ENCODE measurements at regions of chr16 and their contacts with region 1.

Region 1: DNA sequence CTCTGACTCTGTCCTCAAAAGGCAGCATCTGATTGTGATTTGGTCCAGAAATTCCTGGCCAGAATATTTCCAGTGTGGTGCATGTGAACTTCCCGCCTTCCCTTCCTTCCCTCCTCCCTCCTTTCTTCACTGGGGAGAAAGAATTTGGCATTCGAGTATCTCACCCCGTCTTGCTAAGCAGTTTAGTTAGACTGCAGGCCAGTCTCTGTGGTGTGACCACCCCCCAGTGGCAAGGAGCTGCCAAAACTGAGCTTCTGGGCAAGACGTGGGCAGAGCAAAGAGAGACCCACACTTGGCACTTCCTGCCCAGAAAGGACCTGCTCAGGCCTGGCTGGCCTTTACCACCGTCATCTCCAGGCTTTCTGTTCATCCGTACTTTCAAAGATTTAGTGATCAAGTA is 36.4 kb downstream of the SNX20 start:
- DNase-seq: no peak
- ATAC-seq: peak; percentile 71; the same call in 1 of the 2 replicates
- H3K4me3 ChIP-seq: no peak overlapping the region
- H3K27ac ChIP-seq: no peak overlapping the region
- H3K4me1 ChIP-seq: no peaks in the 10 kb centered on the region
- H3K27me3 ChIP-seq: peaks cover 2% of the 10 kb centered on the region
- CTCF ChIP-seq: no peak; the same call in 1 of the 2 replicates

Region 2: GRCh38 chr16:49592546-49593423 is 1051.9 kb before region 1 on chr16:
- CTCF ChIA-PET with region 1: no interaction called
- POLR2A ChIA-PET with region 1: no interaction called
- in situ Hi-C with region 1: no loop called
- intact Hi-C with region 1: no loop called
- DNase-seq: peak; percentile 36
- ATAC-seq: peak; percentile 77
- H3K4me3 ChIP-seq: no peak overlapping the region
- H3K27ac ChIP-seq: no peak overlapping the region
- H3K4me1 ChIP-seq: no peaks in the 10 kb centered on the region
- H3K27me3 ChIP-seq: no peaks in the 10 kb centered on the region; the same call in 1 of the 2 replicates
- CTCF ChIP-seq: peak; percentile 81

Region 3: DNA sequence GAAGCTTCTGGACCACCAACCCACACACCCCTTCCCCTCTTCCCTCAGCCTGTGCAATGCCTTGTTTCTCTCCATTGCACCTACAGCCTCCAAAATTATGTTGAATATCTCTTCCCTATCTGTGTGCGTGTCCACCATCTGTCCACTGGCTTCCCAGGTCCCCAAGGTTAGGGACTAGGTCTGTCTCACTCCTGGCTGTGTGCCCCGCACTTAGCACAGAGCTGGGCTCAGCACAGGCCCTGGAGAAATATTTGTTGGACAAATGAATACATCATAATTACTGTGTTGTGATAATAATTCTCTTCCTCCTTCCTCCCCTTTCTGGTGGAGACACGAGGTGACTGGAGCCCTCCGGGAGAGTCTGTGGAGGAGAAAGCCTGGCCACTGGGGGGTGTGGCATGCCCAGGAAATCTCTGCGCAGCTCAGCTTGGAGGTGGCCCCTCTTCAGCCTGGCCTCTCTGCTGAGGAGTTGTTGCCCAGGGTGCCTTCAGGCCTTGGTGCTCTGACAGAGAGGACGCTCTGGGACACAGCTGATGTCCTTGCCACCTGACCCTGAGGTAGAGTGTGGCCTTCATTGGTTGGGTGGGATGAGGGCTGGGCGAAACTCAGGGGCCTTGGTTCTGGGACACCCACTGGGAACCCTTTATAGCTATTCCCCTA is 272.7 kb before region 1 on chr16:
- CTCF ChIA-PET with region 1: no interaction called
- POLR2A ChIA-PET with region 1: no interaction called
- in situ Hi-C with region 1: no loop called
- intact Hi-C with region 1: no loop called
- DNase-seq: no peak
- ATAC-seq: no peak
- H3K4me3 ChIP-seq: no peak overlapping the region
- H3K27ac ChIP-seq: no peak overlapping the region
- H3K4me1 ChIP-seq: no peaks in the 10 kb centered on the region
- H3K27me3 ChIP-seq: no peaks in the 10 kb centered on the region
- CTCF ChIP-seq: peak; percentile 48

Region 4: GRCh38 chr16:50659806-50660205 is 15.1 kb after region 1 on chr16:
- CTCF ChIA-PET with region 1: no interaction called
- POLR2A ChIA-PET with region 1: interaction called, 12 read pairs
- in situ Hi-C with region 1: no loop called
- intact Hi-C with region 1: no loop called
- DNase-seq: no peak
- ATAC-seq: no peak
- H3K4me3 ChIP-seq: no peak overlapping the region
- H3K27ac ChIP-seq: no peak overlapping the region
- H3K4me1 ChIP-seq: no peaks in the 10 kb centered on the region
- H3K27me3 ChIP-seq: no peaks in the 10 kb centered on the region
- CTCF ChIP-seq: no peak